Astrocyte of the cerebellum (primary cell): ENCODE measurements at regions of chr10 and their contacts with region 1.

Region 1: GRCh38 chr10:13528875-13529713 is at the start of gene BEND7:
- DNase-seq: no peak
- H3K4me3 ChIP-seq: peak within 1 kb of the TSS; percentile 54
- CTCF ChIP-seq: no peak

Region 2: DNA sequence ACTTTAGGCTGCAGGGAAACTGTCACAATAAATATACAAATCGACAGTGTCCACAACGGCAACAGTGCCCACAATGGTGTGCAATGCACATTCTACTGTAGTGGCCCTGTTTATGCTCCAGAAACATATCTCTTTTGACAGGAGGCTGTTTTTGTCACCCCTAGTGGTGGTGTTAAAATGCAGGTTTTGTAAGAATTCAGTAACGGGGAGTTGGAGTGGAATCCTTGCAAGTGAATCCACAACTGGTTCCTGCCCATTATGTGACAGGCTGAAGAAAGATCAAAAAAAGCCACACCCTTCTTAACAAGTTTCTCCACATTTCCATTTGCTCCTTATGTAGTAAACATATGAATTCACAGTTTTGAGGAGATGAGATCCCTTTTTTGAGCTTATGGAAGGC is 58.8 kb before region 1 on chr10:
- in situ Hi-C with region 1: loop called (anchors 5 kb)
- DNase-seq: no peak
- H3K4me3 ChIP-seq: no peak overlapping the region
- CTCF ChIP-seq: no peak

Region 3: GRCh38 chr10:13560597-13560996 is 31.5 kb after region 1 on chr10:
- in situ Hi-C with region 1: no loop called
- DNase-seq: peak; percentile 48
- H3K4me3 ChIP-seq: no peak overlapping the region
- CTCF ChIP-seq: no peak

Region 4: DNA sequence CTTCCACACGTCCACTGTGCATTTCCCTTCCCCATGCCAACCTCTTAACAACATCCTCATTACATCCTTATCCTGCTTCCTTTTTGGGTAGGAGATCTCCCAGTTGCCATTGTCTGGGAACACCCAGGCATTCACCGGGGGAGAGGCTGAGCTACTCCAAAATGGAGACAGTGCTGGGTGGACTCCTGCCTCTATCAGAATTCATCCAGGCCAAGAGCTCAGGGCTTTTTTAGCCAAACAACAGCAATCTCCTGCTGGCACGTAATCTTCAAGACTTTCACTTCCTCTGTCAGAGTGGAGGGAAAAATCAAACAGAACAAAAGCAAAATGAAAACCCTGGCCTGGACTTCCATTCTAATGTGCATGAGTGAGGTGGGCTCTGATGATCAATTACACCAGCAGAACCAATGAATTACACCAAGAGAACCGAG is 302.6 kb after region 1 on chr10:
- in situ Hi-C with region 1: no loop called
- DNase-seq: no peak
- H3K4me3 ChIP-seq: no peak overlapping the region
- CTCF ChIP-seq: no peak